K562 (cell line): ENCODE measurements at regions of chr12 and their contacts with region 1.

Region 1: GRCh38 chr12:53093777-53094393 is 3.6 kb upstream of the IGFBP6 start:
- DNase-seq: peak in 1 of 4 experiments; percentile 9
- ATAC-seq: peak; percentile 14; the same call in 1 of the 3 replicates
- H3K4me3 ChIP-seq: no peak overlapping the region
- H3K27ac ChIP-seq: peak overlapping the region; percentile 43; the same call in 1 of the 3 replicates
- H3K4me1 ChIP-seq: peaks cover 26 to 28% of the 10 kb centered on the region in 2 experiments
- H3K27me3 ChIP-seq: no peaks in the 10 kb centered on the region
- CTCF ChIP-seq: no peak
- EP300 ChIP-seq: no peak
- POLR2A ChIP-seq: no peak
- RAD21 ChIP-seq: no peak

Region 2: DNA sequence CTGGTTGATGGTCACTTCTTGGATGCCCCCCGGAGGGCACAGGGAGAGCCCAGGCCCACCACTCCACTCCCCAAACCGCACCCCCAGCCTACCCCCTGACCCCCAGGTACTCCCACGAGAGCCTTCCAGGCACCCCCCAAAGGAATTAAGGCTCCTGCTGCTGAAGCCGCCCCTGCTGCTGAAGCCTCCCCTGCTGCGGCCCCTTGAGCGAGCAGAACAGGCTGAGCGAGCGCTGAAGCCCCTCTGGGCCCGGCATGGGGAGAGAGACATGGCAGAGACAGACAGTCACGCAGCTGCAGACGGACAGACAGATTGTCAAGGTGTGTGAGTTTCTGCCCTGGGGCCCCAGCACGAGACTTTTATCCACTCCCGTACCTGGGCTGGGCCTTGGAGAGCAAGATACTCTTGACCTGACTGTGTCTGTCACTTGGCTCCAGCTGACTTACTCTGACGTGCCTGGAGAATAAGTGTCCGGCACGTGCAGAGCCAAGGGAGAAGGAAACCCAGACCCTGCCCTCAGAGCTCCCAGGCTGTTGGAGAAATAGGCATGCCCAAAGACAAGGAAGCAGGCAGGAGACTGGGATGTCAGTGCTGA is 245.1 kb before region 1 on chr12 and contains the start of gene KRT78:
- CTCF ChIA-PET with region 1: no interaction called
- POLR2A ChIA-PET with region 1: no interaction called
- in situ Hi-C with region 1: no loop called
- intact Hi-C with region 1: no loop called
- DNase-seq: no peak
- ATAC-seq: no peak
- H3K4me3 ChIP-seq: no peak within 1 kb of the TSS
- H3K27ac ChIP-seq: no peak within 1 kb of the TSS
- H3K4me1 ChIP-seq: no peaks in the 10 kb centered on the region
- H3K27me3 ChIP-seq: peaks cover 20 to 67% of the 10 kb centered on the region in 2 experiments; a peak in 4 of 5 replicates
- CTCF ChIP-seq: no peak
- EP300 ChIP-seq: no peak
- POLR2A ChIP-seq: no peak
- RAD21 ChIP-seq: no peak
- polyA plus RNA-seq, gene KRT78: not detected

Region 3: GRCh38 chr12:53079226-53080117 is 14.4 kb before region 1 on chr12 and contains the start of gene SPRYD3:
- CTCF ChIA-PET with region 1: interaction called, 3 read pairs
- POLR2A ChIA-PET with region 1: interaction called, 12 read pairs
- in situ Hi-C with region 1: no loop called
- intact Hi-C with region 1: no loop called
- DNase-seq: peak; percentile 98 to 100 (median 100)
- ATAC-seq: peak; percentile 99
- H3K4me3 ChIP-seq: peak within 1 kb of the TSS; percentile 58
- H3K27ac ChIP-seq: peak within 1 kb of the TSS; percentile 71
- H3K4me1 ChIP-seq: peaks cover 5 to 13% of the 10 kb centered on the region in 2 experiments; a peak in 3 of 5 replicates
- H3K27me3 ChIP-seq: no peaks in the 10 kb centered on the region
- CTCF ChIP-seq: no peak
- EP300 ChIP-seq: no peak
- POLR2A ChIP-seq: peak; percentile 82
- RAD21 ChIP-seq: no peak
- polyA plus RNA-seq, gene SPRYD3: 1.5 to 2.6 TPM